ENCODE measurements at regions of chr2 and their contacts with region 1.

Region 1: GRCh38 chr2:174577967-174578589 is 19.5 kb downstream of the WIPF1 start:
- DNase-seq: no peak
- H3K4me3 ChIP-seq: no peak overlapping the region
- CTCF ChIP-seq: peak; percentile 66

Region 2: GRCh38 chr2:174383796-174384195 is 194.3 kb before region 1 on chr2:
- CTCF ChIA-PET with region 1: no interaction called
- POLR2A ChIA-PET with region 1: no interaction called
- DNase-seq: no peak
- H3K4me3 ChIP-seq: no peak overlapping the region
- CTCF ChIP-seq: no peak

Region 3: GRCh38 chr2:174588463-174588862 is 10.4 kb after region 1 on chr2:
- CTCF ChIA-PET with region 1: interaction called, 23 read pairs
- POLR2A ChIA-PET with region 1: no interaction called
- DNase-seq: no peak
- H3K4me3 ChIP-seq: no peak overlapping the region
- CTCF ChIP-seq: no peak

Region 4: GRCh38 chr2:174593574-174594203 is 15.6 kb after region 1 on chr2:
- CTCF ChIA-PET with region 1: interaction called, 23 read pairs
- POLR2A ChIA-PET with region 1: no interaction called
- DNase-seq: no peak
- H3K4me3 ChIP-seq: peak overlapping the region; percentile 25
- CTCF ChIP-seq: no peak

Region 5: GRCh38 chr2:174603280-174603679 is 25.2 kb after region 1 on chr2:
- CTCF ChIA-PET with region 1: interaction called, 16 read pairs
- POLR2A ChIA-PET with region 1: no interaction called
- DNase-seq: no peak
- H3K4me3 ChIP-seq: no peak overlapping the region
- CTCF ChIP-seq: peak; percentile 26